Activated B cell treated with CpG ODN at 0.5 μM for 24 hours (primary cell): ENCODE measurements at regions of chr17 and their contacts with region 1.

Region 1: DNA sequence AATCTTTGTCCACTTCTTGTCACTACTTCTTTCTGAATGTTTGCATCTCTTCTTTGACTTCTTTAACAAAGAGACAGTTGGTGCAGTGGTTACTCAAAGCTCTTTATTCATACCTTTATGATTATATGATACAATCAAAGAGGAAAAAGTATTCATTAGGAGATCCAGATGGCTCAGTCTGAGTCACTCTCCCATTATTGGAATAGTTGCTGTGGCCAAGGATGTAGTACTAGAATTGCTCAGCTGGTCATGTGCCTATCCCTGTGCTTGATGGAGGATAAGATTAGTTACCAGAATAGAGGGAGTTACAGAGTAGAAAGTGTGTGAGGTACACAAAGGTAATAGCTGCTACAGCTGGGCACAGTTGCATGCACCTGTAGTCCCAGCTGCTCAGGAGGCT is 18.3 kb downstream of the BCAS3 start:
- DNase-seq: no peak
- ATAC-seq: no peak
- H3K4me3 Mint-ChIP-seq: no peak overlapping the region
- H3K27ac Mint-ChIP-seq: no peak overlapping the region
- H3K4me1 Mint-ChIP-seq: no peaks in the 10 kb centered on the region
- H3K27me3 Mint-ChIP-seq: no peaks in the 10 kb centered on the region
- CTCF ChIP-seq: no peak

Region 2: DNA sequence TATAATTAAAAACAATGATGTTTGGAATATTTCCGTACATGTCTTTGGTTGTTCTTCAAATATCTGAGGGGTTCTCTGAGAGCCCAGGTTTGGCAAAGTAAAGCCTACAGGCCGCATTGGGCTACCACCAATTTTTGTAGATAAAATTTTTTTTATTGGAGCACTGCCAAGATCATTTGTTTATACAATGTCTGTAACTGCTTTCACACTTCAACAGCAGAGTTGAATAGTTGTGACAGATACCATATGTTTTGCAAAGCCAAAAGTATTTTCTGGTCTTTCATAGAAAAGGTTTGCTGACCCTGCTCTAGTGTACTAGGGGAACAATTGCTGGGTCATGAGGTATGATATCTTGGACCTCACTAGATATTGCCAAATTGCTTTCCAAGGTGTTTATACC is 85.5 kb before region 1 on chr17:
- CTCF ChIA-PET with region 1: no interaction called
- POLR2A ChIA-PET with region 1: interaction called, 10 read pairs
- intact Hi-C with region 1: no loop called
- DNase-seq: no peak
- ATAC-seq: no peak
- H3K4me3 Mint-ChIP-seq: no peak overlapping the region
- H3K27ac Mint-ChIP-seq: no peak overlapping the region
- H3K4me1 Mint-ChIP-seq: peaks cover 26% of the 10 kb centered on the region
- H3K27me3 Mint-ChIP-seq: no peaks in the 10 kb centered on the region
- CTCF ChIP-seq: no peak